Activated B cell treated with CpG ODN at 0.5 μM for 24 hours (primary cell): ENCODE measurements at regions of chr12 and their contacts with region 1.

Region 1: DNA sequence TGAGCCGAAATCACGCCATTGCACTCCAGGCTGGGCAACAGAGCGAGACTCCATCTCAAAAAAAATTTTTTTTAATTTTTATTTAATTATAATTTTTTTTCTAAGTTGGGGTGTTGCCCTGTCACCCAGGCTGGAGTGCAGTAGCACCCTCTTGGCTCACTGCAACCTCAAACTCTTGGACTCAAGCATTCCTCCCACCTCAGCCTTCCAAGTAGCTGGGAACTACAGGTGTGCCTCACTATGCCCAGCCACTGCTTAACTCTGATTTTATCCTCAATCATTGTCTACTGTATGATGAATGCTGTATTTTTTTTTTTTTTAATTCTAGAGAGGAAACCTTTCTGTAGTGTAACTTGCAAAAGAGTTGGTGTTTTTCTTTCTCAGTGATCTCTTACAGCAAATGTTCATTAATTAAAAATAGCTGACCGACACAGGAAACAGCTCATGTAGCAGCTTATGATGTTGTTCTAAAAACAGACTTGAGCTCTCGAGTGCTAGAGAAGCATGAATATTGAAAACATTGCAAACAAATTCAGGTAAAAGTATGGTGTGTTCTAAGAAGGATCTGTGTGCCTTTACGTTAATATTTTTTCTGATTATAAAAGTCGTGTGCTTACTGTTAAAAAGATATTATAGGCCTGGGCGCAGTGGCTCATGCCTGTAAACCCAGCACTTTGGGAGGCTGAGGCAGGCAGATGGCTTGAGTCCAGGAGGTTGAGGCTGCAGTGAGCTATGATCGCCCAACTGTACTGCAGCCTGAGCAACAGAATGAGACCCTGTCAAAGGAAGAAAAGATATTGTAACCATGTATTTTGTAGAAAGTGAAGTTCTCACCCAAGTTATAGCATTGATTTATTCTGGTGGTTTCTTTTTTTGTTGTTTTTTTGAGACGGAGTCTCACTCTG is 68.9 kb downstream of the FGD4 start:
- DNase-seq: no peak
- ATAC-seq: peak; percentile 28
- H3K4me3 Mint-ChIP-seq: peak overlapping the region; percentile 53
- H3K27ac Mint-ChIP-seq: peak overlapping the region; percentile 85
- H3K4me1 Mint-ChIP-seq: peaks cover 30% of the 10 kb centered on the region
- H3K27me3 Mint-ChIP-seq: no peaks in the 10 kb centered on the region
- CTCF ChIP-seq: no peak

Region 2: DNA sequence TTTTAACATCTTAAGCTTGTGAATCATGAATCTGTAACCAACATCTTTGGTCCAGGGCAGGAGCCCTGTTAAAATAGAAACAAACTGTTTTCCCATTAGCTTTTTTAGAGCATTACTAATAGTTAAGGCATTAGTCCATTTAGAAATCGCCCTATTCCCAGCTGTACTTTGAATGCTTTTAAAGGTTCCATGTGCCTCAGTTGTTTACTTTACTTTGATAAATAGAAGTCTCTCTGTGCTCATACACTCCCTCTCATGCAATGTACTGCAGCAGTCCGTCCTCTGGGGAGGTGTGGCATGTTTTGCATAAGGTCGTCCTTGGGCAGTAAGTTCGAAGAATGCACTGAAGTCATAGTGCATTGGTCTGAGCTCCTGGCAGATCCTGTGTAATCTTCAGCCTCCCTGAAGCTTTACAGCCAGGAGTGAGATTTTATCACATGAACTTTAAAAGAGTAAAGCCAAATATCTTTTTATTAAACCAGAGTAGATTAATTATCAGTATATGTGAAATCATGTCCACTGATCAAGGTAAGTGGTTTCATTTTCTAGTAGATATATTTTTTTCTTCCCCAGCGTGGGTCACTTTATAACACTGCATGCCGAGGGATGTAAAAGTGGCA is 65.9 kb after region 1 on chr12:
- CTCF ChIA-PET with region 1: no interaction called
- POLR2A ChIA-PET with region 1: no interaction called
- intact Hi-C with region 1: loop called (anchors 5 kb)
- DNase-seq: no peak
- ATAC-seq: peak; percentile 83
- H3K4me3 Mint-ChIP-seq: peak overlapping the region; percentile 84
- H3K27ac Mint-ChIP-seq: peak overlapping the region; percentile 62
- H3K4me1 Mint-ChIP-seq: peaks cover 42% of the 10 kb centered on the region
- H3K27me3 Mint-ChIP-seq: no peaks in the 10 kb centered on the region
- CTCF ChIP-seq: no peak